ENCODE measurements at regions of chr11 and their contacts with region 1.

Region 1: DNA sequence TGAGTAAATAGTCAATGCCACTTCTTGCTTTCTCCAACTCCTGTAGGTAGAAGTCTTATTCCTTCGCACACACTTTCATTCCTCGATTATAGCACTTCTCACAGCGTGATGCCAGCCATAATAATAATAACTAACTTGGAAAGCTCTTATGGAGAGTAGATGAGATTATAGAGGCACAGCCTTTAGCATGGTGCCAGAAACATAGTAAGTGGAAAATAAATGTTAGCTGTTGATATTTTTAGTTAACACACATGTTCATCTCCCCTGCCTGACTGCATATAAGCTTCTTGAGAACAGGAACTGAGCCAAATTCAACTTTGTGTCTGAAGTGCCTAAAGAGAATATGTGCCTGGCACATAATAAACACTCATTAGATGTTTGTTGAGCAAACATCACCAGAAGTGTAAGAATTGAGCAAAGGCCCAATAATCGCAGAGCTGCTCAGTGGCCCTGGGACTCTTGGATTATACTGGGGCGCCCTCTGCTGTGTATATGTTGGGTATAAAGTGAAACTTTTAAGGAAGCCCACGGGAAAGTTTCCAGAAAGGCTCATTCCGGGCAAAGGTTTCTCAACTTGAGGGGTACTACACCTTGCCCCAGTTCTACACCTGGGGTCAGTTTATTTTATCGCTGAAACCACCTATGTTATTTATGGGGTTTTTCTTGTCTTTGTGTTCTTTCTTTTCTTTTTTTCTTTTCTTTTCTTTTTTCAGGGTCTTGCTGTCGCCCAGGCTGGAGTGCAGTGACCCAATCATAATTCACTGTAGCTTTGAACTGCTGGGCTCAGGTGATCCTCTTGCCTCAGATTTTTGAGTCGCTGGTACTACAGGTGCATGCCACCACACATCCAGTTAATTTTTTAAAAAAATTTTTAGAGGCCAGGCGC is 22.3 kb downstream of the SLN start:
- DNase-seq: peak; percentile 55
- CTCF ChIP-seq: peak; percentile 51

Region 2: DNA sequence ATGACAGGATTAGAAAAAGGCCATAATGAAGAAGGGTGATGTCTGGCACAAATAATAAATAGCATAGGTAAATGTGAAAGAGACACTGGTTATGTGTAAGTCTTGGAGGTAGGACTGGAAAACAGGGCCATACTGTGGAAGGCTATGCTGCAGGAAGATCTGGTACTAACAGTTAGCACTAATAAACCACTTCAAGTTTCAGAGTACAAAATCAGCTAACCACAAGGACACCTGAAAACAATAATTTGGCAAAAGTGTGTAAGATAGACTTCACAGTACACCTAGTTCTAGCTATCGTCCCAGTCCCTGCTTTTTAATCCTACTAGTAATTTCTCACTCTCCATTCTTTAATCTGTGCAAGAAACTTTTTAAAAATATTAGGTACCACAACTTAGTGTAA is 276.2 kb before region 1 on chr11:
- CTCF ChIA-PET with region 1: no interaction called
- POLR2A ChIA-PET with region 1: no interaction called
- DNase-seq: no peak
- CTCF ChIP-seq: no peak

Region 3: DNA sequence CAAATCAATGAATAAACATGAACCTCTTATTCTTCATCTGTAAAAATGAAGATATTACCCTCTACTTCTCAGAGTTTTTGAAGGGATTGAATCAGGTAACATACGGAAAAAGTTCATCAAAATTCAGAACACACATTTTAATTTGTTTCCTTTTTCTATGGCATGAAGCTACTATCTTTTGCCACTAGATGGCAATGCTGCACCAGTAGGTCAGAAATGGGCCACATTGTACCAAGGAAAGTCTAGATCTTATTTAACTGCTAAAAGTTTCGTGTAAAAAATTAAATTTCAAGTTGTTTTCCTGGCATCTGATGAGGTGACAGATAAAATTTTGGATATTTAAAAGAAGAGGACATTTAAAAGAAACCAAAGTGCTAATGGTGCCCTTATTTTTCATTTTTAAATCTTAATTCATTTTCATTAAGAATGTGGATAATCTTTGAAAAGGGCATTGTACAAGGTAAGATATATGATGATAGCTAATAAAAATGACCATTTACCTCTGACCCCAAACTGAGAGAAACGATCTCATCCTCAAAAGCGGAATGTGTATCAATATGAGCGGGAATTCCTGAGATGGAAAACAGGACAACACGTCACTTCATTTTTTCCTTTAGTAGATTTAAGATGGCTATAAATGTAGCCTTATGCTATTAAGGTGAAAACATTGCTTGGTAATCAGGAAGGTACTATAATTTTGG is 140.2 kb before region 1 on chr11:
- CTCF ChIA-PET with region 1: interaction called, 97 read pairs
- POLR2A ChIA-PET with region 1: no interaction called
- DNase-seq: peak; percentile 35
- CTCF ChIP-seq: peak; percentile 85

Region 4: GRCh38 chr11:107565219-107565937 is 124.2 kb before region 1 on chr11 and contains the start of gene ALKBH8:
- CTCF ChIA-PET with region 1: interaction called, 55 read pairs
- POLR2A ChIA-PET with region 1: interaction called, 3 read pairs
- DNase-seq: peak; percentile 74
- CTCF ChIP-seq: no peak

Region 5: GRCh38 chr11:107573438-107573837 is 116.1 kb before region 1 on chr11:
- CTCF ChIA-PET with region 1: interaction called, 59 read pairs
- POLR2A ChIA-PET with region 1: no interaction called
- DNase-seq: no peak
- CTCF ChIP-seq: no peak

Region 6: GRCh38 chr11:107669191-107669740 is 20.3 kb before region 1 on chr11:
- CTCF ChIA-PET with region 1: interaction called, 22 read pairs
- POLR2A ChIA-PET with region 1: no interaction called
- DNase-seq: no peak
- CTCF ChIP-seq: no peak

Region 7: DNA sequence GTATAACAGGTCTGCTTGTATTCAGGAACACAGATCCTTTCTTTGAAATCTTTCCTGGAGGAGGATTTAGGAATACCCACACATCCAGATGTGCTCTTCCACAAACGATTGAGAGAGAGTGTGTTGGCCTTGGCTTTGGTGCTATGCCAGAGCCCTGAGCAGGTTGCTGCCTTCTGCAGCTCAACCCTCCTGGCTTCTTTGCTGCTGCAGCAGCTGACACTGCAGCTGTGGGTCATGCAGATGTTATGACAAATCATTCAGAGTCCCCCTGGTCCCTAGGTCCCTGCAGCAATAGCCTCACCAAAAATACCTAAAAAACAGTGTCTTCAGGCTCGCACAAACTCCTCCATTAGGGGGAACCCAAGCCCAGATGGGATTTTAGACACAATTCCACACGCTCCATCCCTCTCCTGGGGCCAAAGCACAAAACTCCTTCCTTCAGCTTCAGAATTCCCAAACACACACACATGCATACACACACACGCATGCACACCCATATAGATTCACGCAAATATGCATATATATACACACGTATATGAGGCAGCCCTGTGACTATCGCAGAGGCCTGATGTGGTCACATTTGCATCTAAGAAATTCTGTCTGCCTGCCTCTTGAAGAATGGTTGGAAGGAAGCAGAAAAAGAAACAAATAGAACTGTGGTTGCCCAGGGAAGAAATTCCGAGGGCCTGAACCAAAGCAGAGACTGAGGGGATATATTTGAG is 13.1 kb before region 1 on chr11:
- CTCF ChIA-PET with region 1: interaction called, 22 read pairs
- POLR2A ChIA-PET with region 1: no interaction called
- DNase-seq: no peak
- CTCF ChIP-seq: no peak

Region 8: DNA sequence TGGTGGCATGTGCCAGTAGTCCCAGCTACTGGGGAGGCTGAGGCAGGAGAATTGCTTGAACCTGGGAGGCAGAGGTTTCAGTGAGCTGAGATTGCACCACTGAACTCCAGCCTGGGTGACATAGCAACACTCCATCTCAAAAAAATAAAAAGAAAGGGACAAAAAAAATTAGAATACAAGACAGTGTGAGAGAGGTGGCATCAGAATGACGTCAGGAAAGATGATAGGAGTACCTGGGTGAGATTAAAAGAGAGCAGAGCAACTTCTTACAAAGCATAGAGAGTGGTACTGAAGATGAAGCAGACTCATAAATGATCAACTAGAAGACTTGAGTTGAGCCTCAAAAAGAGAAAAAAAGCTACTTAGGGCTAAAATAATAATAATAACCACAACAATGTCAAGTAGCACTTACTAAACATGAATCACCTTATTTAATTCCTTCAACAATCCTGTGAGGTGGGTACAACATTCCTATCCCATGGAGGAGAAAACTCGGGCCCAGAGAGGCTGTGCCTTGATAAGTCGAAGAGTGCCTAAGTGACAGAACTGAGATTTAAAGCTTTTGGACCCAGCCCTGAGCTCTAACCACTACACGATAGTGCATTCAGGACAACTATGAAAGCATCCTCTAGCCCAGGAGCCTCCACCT is 27.4 kb after region 1 on chr11:
- CTCF ChIA-PET with region 1: no interaction called
- POLR2A ChIA-PET with region 1: no interaction called
- DNase-seq: no peak
- CTCF ChIP-seq: no peak

Region 9: DNA sequence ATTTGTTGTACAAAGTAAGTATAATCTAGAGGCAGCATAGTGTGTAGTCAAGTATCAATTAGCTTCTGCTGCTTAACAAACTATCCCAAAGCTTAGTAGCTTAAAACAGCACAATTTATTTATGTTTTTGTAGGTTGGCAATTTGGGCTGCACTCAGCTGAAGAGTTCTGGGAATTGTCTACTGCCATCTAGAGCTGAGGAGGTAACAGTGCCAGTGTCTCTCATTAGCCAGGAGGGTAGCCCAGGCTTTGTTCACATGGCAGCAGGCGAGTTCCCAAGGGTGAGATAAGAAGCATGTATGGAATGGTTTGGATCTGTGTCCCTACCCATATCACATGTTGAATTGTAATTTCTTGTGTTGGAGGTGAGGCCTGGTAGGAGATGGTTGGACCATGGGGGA is 68.1 kb after region 1 on chr11:
- CTCF ChIA-PET with region 1: interaction called, 10 read pairs
- POLR2A ChIA-PET with region 1: no interaction called
- DNase-seq: no peak
- CTCF ChIP-seq: no peak

Measured in GM10248 (cell line).